Activated T-helper 1 cell treated with anti-CD3 and anti-CD28 coated beads, Interleukin-12 subunit alpha, Interleukin-12 subunit beta, Interleukin-2, Interleukin-4 antibody, amounts not matched to agents 30 ng/mL and 10 ng/mL and 1 ng/mL, durations not matched to agents 14 hours and 24 hours and 36 hours (primary cell): ENCODE measurements at regions of chr17 and their contacts with region 1.

Region 1: DNA sequence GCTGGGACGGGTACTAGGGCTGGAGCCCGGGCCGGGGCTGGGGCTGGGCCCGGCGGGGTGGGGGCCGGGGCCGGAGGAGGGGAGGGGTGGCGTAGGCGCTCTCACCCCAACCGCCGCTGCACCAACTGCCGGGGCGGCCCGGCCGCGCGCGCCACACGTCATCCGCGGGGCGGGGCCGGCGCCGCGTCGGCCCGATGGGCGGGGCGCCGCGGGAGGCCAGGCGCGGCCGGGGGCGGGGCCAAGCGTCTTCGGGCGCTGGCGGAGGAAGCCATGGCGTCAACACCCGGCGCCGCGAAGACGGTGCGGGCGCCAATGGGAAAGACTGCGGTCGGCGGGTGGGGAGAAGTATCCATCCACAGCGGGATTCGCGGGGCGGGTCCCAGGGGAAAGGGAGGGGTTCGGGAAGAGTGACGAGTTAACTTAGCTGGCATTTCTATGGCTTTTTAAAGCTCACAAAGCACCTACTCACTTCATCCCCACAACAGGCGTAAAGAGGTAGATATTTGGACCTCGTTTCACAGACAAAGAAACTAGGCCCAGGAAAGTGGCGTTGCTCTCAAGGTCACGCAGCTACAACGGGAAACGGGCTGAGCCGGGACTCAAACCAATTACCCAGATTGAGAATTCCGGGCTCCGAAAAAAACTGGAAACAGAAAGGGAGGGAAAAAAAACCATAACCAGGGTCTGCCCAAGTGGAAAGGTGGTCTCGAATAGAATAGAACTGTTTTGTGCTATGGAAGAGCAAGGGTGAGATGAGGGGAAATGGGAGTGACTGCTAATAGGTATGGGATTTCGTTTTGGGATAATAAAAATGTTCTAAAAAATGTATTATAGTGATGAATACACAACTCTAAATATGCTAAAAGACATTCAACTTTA is at the start of gene SPAG9:
- DNase-seq: peak; percentile 93
- H3K4me3 Mint-ChIP-seq: peak within 1 kb of the TSS; percentile 97
- H3K27ac Mint-ChIP-seq: peak within 1 kb of the TSS; percentile 99
- H3K4me1 Mint-ChIP-seq: peaks cover 55% of the 10 kb centered on the region
- H3K27me3 Mint-ChIP-seq: peaks cover 2% of the 10 kb centered on the region
- total RNA-seq, gene SPAG9: 44.1 and 45.2 TPM in 2 replicates

Region 2: DNA sequence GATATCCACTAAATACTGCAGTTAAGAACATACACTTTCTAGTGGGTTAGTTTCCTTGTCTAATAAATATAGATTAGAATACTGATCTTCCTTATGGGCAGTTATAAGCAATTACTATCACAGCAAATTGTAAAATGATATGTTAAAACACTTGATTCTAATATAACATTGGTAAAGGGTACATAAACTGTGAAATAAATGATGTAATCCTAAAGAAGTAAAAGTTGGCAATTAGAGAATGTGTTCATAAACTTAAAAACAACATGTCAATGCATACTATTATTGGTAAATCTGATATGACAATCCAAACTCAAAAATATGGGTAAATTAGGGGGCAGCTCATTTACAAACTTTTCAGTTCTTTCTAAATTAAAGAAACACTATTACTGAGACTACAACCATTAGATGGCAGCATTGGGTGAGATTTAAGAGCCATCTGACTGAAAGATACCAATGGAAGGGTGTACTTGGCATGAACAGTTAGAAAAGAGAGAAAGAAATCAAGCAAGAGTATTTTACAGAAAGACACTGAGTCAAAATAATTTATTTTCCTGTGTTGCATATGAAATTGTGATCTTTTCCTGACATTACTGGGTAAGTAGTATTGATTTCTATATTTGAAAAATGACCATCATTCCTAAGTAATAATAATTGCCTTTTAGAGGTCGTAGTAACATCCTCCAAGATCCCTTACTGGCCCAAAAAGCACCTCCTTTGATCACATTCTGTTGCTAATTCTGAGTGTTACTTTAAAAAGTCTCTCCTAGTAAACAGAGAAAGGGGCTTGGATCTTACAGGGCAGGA is 119.9 kb before region 1 on chr17:
- intact Hi-C with region 1: loop called (anchors 1 kb)
- DNase-seq: no peak
- H3K4me3 Mint-ChIP-seq: no peak overlapping the region
- H3K27ac Mint-ChIP-seq: no peak overlapping the region
- H3K4me1 Mint-ChIP-seq: peaks cover 7% of the 10 kb centered on the region
- H3K27me3 Mint-ChIP-seq: no peaks in the 10 kb centered on the region

Region 3: DNA sequence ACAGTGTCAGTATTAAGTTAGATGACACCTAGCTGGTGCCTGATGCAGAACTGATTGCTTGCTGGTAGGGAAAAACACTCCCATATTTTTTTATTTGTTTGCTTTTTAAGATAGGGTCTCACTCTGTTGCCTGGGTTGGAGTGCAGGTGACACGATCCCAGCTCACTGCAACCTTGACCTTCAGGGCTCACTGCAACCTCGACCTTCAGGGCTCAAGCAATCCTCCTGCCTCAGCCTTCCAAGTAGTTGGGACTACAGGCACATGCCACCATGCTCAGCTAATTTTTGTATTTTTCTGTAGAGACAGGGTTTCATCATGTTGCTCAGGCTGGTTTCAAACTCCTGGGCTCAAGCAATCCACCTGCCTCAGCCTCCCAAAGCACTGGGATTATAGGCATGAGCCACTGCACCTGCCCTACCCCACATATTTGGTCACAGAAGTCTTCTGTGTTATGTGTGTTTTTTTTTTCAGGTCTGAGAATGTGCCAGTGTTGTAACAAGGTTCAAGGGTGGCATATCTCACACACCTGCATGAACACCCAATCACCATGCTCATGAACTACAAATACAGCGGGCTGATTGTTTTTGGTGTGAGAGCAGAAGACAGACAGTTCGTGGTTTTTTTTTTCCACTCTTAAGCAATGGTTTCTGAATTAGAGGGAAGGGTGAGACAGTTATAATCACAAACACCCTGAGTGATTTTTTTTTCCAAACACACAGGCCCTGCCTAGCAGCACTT is 23.1 kb before region 1 on chr17:
- intact Hi-C with region 1: loop called (anchors 2 kb)
- DNase-seq: no peak
- H3K4me3 Mint-ChIP-seq: no peak overlapping the region
- H3K27ac Mint-ChIP-seq: no peak overlapping the region
- H3K4me1 Mint-ChIP-seq: peaks cover 30% of the 10 kb centered on the region
- H3K27me3 Mint-ChIP-seq: no peaks in the 10 kb centered on the region

Region 4: GRCh38 chr17:51153210-51154072 is 32.5 kb after region 1 on chr17 and contains the start of gene NME1:
- intact Hi-C with region 1: loop called (anchors 1 kb)
- DNase-seq: peak; percentile 96
- H3K4me3 Mint-ChIP-seq: no peak within 1 kb of the TSS
- H3K27ac Mint-ChIP-seq: no peak within 1 kb of the TSS
- H3K4me1 Mint-ChIP-seq: peaks cover 21% of the 10 kb centered on the region
- H3K27me3 Mint-ChIP-seq: no peaks in the 10 kb centered on the region
- total RNA-seq, gene NME1: 413 and 424 TPM in 2 replicates

Region 5: GRCh38 chr17:51260125-51260880 is 139.3 kb after region 1 on chr17 and contains the start of gene UTP18:
- intact Hi-C with region 1: loop called (anchors 1 kb)
- DNase-seq: peak; percentile 93
- H3K4me3 Mint-ChIP-seq: peak within 1 kb of the TSS; percentile 88
- H3K27ac Mint-ChIP-seq: peak within 1 kb of the TSS; percentile 97
- H3K4me1 Mint-ChIP-seq: peaks cover 60% of the 10 kb centered on the region
- H3K27me3 Mint-ChIP-seq: no peaks in the 10 kb centered on the region
- total RNA-seq, gene UTP18: 89.7 and 95.6 TPM in 2 replicates